Right ventricle myocardium superior (tissue), 1 donor: ENCODE measurements at regions of chr12 and their contacts with region 1.

Region 1: DNA sequence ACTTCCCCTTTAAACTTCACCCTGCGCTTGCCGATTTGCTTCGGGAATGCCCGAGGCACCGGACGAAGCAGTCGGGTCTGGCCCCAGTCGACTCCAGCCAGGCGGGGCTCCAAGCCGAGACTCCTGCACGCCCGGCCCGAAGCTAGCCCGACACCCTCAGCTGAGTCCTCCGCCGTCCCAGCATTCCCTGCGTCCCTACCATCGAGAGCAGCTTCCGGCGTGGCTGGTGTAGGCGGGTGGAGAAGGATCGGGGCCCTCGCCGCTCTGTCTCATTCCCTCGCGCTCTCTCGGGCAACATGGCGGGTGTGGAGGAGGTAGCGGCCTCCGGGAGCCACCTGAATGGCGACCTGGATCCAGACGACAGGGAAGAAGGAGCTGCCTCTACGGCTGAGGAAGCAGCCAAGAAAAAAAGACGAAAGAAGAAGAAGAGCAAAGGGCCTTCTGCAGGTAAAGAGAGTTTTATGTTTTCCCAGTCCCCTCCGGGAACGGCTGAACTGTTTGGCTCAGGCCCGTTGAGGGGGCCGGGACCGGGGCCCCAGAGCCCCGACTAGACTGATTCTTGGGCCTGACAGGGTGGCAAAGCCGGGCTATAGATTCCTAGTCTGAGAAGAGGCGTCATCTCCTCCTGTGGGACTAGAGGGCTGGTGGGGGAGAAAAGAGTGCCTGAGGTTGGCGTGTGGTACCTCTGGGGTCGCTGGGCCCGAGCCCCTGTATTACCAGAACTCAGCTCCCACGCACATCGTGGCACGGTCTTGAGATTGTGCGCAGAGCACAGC is at the start of gene METAP2:
- DNase-seq: peak; percentile 98
- ATAC-seq: peak; percentile 99
- total RNA-seq, gene METAP2: 51.4 TPM

Region 2: DNA sequence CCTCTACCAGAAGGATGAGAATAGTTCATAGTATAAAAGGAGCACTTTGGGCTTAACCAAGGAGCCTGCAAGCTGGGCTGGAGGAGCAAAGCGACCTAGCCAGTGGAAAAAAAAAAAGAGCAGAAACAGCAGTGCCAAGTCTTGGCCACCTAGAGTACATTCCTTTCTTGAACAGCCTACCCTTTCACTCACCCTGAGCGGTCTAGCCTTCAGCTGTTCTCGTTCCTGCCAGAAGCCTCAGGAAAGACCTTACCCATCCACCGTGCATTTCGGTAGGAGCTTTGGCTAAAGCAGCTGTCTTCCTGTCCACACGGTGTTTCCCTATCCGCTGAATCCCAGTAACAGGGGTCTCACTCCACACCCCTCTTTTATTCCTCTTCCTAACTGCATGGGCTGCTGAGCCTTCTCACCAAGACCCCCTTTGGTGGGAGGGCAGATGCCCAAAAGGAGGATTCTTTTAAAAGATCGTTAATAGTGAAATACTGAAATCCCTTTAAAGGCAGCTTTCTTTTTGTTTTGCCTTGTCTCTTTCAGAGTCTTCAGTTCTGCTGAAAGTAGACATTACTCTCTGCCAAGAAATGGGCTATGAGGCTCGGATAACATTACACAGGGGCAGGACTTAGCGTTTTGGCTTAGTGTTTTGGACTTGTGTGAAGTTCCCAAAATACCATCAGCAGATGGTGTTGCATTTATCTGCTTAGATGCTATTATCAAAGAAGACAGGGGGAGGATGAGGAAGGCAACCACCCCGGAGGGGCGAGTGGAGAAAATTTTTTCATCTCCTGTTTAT is 88.6 kb before region 1 on chr12:
- intact Hi-C with region 1: loop called (anchors 5 kb)
- DNase-seq: no peak
- ATAC-seq: peak; percentile 93

Region 3: DNA sequence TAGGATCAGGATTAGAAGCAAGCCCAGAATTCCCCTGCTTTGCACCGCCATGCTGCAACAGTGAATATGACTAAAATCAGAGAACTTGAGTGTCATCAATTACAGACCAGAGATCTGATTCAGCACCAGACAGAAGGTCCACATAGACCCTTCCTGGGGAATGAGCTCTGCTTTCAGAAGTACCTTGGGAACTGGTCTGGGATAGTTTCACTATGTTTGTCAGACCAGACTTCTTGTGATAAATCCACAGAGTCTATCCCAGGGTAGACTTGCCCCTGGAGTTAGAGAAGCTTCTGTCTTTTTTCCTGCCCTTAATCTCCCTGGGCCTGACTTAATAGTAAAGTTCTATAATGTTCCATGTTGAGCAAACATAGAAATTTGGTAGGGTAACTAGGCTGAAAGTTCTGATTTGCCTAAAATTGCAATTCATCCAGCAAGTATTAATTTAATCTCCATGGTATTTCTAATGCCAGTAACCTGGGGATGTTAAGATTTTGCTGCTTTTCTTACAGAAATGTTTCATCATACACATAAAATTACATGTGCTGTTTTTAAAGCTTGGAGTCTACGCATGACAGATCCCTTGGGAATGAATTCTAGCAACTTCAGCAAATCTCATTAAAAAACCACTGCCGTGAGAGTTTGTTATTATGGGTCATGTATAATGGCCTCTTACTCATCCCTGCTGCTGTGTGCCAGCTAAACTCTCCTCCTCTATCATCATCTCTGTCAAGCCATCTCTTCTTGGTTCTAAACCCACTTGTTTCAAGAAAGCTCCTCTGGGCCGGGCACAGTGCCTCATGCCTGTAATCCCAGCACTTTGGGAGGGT is 61.4 kb before region 1 on chr12:
- intact Hi-C with region 1: no loop called
- DNase-seq: no peak
- ATAC-seq: no peak